ENCODE measurements at regions of chr1 and their contacts with region 1.

Region 1: DNA sequence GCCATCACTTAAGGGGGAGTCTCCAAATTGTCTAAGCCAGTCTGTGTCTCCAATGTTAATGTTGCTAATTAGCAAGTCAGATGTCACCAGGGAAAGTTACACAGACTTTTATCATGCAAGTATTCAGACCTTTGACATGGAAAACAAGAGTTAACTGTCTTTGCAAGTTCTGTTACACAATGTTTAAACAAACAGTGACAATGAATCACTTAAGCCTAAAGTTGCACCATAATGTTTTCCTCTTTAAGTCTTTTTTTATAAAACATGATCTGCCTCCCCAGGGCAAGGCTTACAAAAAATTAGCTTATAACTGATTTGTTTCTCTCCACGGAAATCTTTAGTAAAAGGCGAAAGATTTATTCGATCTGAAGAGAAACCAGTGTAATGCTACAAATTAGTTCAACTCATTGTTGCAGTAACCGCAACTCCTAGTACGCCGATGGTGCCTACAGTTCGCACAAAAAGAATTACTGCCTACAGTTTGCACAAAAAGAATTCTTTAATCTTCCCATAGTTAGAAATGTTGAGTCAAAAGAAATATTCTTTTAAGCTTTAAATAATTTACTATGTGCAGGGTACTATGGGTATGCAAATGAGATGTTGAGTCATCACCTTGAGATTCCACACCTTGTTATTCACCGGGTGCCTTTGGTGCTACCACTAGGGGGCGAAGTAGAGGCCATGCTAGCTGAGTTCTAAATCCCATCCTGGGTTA is 45.3 kb downstream of the HHAT start:
- DNase-seq: peak; percentile 100
- H3K4me3 ChIP-seq: no peak overlapping the region
- H3K27ac ChIP-seq: peak overlapping the region; percentile 99
- H3K4me1 ChIP-seq: peaks cover 4% of the 10 kb centered on the region
- H3K27me3 ChIP-seq: no peaks in the 10 kb centered on the region
- CTCF ChIP-seq: peak; percentile 97 to 99

Region 2: GRCh38 chr1:210272666-210273065 is 101.4 kb before region 1 on chr1:
- CTCF ChIA-PET with region 1: no interaction called
- dilution Hi-C with region 1: no loop called
- in situ Hi-C with region 1: no loop called
- intact Hi-C with region 1: no loop called
- DNase-seq: no peak
- H3K4me3 ChIP-seq: no peak overlapping the region
- H3K27ac ChIP-seq: no peak overlapping the region
- H3K4me1 ChIP-seq: no peaks in the 10 kb centered on the region
- H3K27me3 ChIP-seq: no peaks in the 10 kb centered on the region
- CTCF ChIP-seq: no peak

Region 3: GRCh38 chr1:210344706-210345105 is 29.3 kb before region 1 on chr1:
- CTCF ChIA-PET with region 1: no interaction called
- dilution Hi-C with region 1: no loop called
- in situ Hi-C with region 1: no loop called
- intact Hi-C with region 1: loop called (anchors 2 kb)
- DNase-seq: peak; percentile 66
- H3K4me3 ChIP-seq: no peak overlapping the region
- H3K27ac ChIP-seq: no peak overlapping the region
- H3K4me1 ChIP-seq: peaks cover 15% of the 10 kb centered on the region
- H3K27me3 ChIP-seq: no peaks in the 10 kb centered on the region
- CTCF ChIP-seq: no peak

Region 4: DNA sequence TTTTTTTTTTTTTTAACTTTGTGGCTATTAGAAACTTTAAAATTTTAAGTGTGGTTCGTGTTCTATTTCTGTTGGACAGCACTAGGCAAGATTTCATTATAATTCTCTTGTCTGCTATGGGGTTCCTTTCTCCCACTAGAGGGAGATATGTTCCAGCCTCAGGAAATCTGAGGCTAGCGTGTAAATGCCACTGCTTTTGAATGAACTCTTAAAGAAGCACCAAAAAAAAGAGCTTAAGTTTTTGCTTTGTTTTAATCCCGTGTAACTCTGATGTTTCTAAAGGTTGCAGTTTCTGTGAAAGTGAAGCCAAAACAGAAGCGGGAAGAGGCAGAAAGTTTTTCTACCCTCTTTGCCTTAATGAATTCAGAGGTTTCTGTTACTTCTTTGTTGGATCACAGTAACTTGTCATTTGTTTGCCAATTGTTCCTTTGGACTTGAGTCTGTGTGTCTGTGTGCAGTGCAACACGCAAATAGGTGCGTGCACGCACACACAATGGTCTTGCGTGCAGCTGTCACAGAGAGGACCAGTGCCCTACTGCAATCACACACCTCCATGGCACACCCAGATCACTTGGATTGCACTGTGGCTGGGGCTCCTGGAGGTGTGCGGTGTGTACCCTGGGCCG is 13.1 kb before region 1 on chr1:
- CTCF ChIA-PET with region 1: interaction called, 17 read pairs
- dilution Hi-C with region 1: no loop called
- in situ Hi-C with region 1: no loop called
- intact Hi-C with region 1: no loop called
- DNase-seq: peak; percentile 43
- H3K4me3 ChIP-seq: no peak overlapping the region
- H3K27ac ChIP-seq: no peak overlapping the region
- H3K4me1 ChIP-seq: peaks cover 24% of the 10 kb centered on the region
- H3K27me3 ChIP-seq: no peaks in the 10 kb centered on the region
- CTCF ChIP-seq: peak; percentile 76 to 82

Region 5: DNA sequence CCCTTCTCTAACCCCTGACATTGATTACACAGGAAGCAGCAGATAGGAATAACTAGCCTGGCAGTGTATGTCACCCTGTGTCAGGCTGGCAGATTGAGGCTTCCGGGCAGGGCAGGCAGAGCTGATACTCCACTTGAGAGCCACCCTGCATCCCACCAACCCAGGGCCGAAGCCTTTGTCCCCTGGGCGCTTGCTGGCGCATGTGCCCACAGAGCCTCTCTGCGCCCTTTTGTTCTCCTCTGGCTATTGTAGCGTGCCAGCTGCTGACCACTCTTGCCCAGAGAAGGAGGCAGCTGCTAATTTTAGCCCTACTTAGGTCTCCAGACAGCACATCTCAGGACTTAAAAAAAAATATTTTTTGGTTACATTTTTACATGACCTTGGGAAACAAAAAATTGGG is 259.6 kb after region 1 on chr1:
- CTCF ChIA-PET with region 1: no interaction called
- dilution Hi-C with region 1: no loop called
- in situ Hi-C with region 1: no loop called
- intact Hi-C with region 1: no loop called
- DNase-seq: no peak
- H3K4me3 ChIP-seq: no peak overlapping the region
- H3K27ac ChIP-seq: no peak overlapping the region
- H3K4me1 ChIP-seq: no peaks in the 10 kb centered on the region
- H3K27me3 ChIP-seq: no peaks in the 10 kb centered on the region
- CTCF ChIP-seq: no peak

Measured in mammary epithelial cell (primary cell).